ENCODE measurements at regions of chr10 and their contacts with region 1.

Region 1: GRCh38 chr10:71727738-71728737 is 8.5 kb upstream of the C10orf105 start:
- DNase-seq: peak; percentile 34 to 91 (median 82)
- ATAC-seq: peak; percentile 78
- H3K4me3 ChIP-seq: peak overlapping the region; percentile 2
- H3K4me3 Mint-ChIP-seq: peak overlapping the region; percentile 61 to 86 (median 78)
- H3K27ac ChIP-seq: peak overlapping the region; percentile 79
- H3K27ac Mint-ChIP-seq: peak overlapping the region; percentile 96 to 99 (median 97)
- H3K4me1 ChIP-seq: peaks cover 75 to 83% of the 10 kb centered on the region in 2 donors
- H3K4me1 Mint-ChIP-seq: peaks cover 54 to 97% (median 72%) of the 10 kb centered on the region in 7 donors
- H3K27me3 ChIP-seq: no peaks in the 10 kb centered on the region
- H3K27me3 Mint-ChIP-seq: no peaks in the 10 kb centered on the region

Region 2: GRCh38 chr10:71713135-71714030 is 14.7 kb before region 1 on chr10:
- CTCF ChIA-PET with region 1: interaction called, 25 read pairs
- POLR2A ChIA-PET with region 1: interaction called, 150 read pairs
- intact Hi-C with region 1: loop called (anchors 1 kb)
- DNase-seq: peak in 2 of 9 donors; percentile 40 to 41
- ATAC-seq: peak; percentile 47
- H3K4me3 ChIP-seq: peak overlapping the region; percentile 9
- H3K4me3 Mint-ChIP-seq: peak overlapping the region; percentile 73 to 86 (median 81)
- H3K27ac ChIP-seq: peak overlapping the region; percentile 91
- H3K27ac Mint-ChIP-seq: peak overlapping the region; percentile 97 to 100 (median 98)
- H3K4me1 ChIP-seq: peaks cover 45 to 63% of the 10 kb centered on the region in 2 donors
- H3K4me1 Mint-ChIP-seq: peaks cover 41 to 86% (median 73%) of the 10 kb centered on the region in 7 donors
- H3K27me3 ChIP-seq: no peaks in the 10 kb centered on the region
- H3K27me3 Mint-ChIP-seq: no peaks in the 10 kb centered on the region

Region 3: DNA sequence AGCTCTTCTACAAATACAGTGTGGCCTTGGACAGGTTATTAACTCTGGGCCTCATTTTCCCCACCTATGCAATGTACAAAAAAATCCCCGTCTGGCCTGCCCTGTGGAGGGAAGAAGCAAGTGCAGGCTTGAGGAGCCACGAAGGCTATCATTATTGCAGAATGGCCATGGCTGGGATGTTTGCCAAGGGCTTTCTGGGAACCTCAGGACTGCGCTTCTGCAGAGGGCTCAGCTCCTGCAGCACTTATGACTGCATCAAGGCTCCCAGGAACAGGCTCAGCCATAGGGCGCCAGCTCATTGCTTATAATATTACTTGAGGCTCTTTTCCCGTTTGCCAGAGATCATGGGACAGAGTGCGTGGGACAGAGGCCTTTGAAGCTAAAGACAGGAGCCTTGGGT is 12.0 kb after region 1 on chr10:
- CTCF ChIA-PET with region 1: interaction called, 7 read pairs
- POLR2A ChIA-PET with region 1: interaction called, 521 read pairs
- intact Hi-C with region 1: loop called (anchors 1 kb)
- DNase-seq: no peak
- ATAC-seq: no peak
- H3K4me3 ChIP-seq: peak overlapping the region; percentile 55
- H3K4me3 Mint-ChIP-seq: peak overlapping the region; percentile 12 to 90 (median 72)
- H3K27ac ChIP-seq: peak overlapping the region; percentile 74
- H3K27ac Mint-ChIP-seq: peak overlapping the region; percentile 81 to 99 (median 96)
- H3K4me1 ChIP-seq: peaks cover 85 to 97% of the 10 kb centered on the region in 2 donors
- H3K4me1 Mint-ChIP-seq: peaks cover 73 to 100% (median 95%) of the 10 kb centered on the region in 7 donors
- H3K27me3 ChIP-seq: no peaks in the 10 kb centered on the region
- H3K27me3 Mint-ChIP-seq: no peaks in the 10 kb centered on the region

Region 4: GRCh38 chr10:71748671-71749191 is 20.7 kb after region 1 on chr10:
- CTCF ChIA-PET with region 1: interaction called, 30 read pairs
- POLR2A ChIA-PET with region 1: interaction called, 521 read pairs
- intact Hi-C with region 1: loop called (anchors 1 kb)
- DNase-seq: peak; percentile 53 to 93 (median 88)
- ATAC-seq: peak; percentile 87
- H3K4me3 ChIP-seq: peak overlapping the region; percentile 40
- H3K4me3 Mint-ChIP-seq: peak overlapping the region; percentile 74 to 90 (median 85)
- H3K27ac ChIP-seq: peak overlapping the region; percentile 74
- H3K27ac Mint-ChIP-seq: peak overlapping the region; percentile 95 to 99 (median 98)
- H3K4me1 ChIP-seq: peaks cover 93 to 99% of the 10 kb centered on the region in 2 donors
- H3K4me1 Mint-ChIP-seq: peaks cover 80 to 98% (median 93%) of the 10 kb centered on the region in 7 donors
- H3K27me3 ChIP-seq: no peaks in the 10 kb centered on the region
- H3K27me3 Mint-ChIP-seq: no peaks in the 10 kb centered on the region

Region 5: DNA sequence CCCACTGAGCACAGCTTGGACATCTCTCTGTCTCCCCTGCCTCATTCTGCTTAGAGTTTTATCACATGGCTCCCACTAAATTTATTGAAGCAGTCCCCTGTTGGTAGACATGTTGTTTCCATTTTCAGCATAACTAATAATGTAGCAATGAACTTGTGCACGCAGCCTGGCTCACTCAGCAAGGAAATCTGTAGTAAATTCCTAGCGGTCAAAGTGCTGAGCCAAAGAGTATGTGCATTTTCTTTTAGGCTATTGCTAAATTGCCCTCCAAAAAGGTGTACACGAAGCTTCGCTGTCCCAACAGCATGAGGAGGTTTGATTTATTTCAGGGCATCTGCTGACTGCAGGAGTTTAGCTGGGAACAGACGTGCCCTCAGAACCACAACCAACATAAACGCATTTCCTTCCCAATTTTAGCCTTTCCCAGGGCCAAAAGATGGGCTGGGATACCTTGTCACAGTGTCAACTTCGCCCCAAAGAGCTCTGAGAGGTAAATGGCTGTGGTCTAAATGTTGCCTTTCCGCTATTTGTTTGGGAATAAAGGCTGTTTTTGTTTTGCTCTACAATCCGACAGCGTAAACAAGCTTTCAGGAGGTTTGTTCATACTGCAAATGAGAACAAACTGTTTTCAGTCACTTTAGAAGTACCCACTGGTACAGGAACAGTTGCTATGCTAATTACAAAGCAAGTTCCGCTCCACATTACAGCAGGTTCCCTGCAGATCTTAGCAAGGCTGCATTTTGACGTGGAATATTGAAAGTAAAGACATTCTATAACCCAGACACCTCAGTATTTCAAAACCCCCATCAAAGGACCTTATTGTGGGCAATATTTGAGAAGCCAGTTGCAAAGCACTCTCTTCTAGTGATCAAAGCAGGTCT is 28.5 kb after region 1 on chr10:
- CTCF ChIA-PET with region 1: interaction called, 31 read pairs
- POLR2A ChIA-PET with region 1: interaction called, 102 read pairs
- intact Hi-C with region 1: loop called (anchors 2 kb)
- DNase-seq: peak in 7 of 9 donors; percentile 58 to 85 (median 74)
- ATAC-seq: peak; percentile 79
- H3K4me3 ChIP-seq: peak overlapping the region; percentile 21
- H3K4me3 Mint-ChIP-seq: peak overlapping the region; percentile 68 to 90 (median 80)
- H3K27ac ChIP-seq: peak overlapping the region; percentile 74
- H3K27ac Mint-ChIP-seq: peak overlapping the region; percentile 91 to 99 (median 97)
- H3K4me1 ChIP-seq: peaks cover 81 to 87% of the 10 kb centered on the region in 2 donors
- H3K4me1 Mint-ChIP-seq: peaks cover 71 to 94% (median 85%) of the 10 kb centered on the region in 7 donors
- H3K27me3 ChIP-seq: no peaks in the 10 kb centered on the region
- H3K27me3 Mint-ChIP-seq: no peaks in the 10 kb centered on the region

Region 6: DNA sequence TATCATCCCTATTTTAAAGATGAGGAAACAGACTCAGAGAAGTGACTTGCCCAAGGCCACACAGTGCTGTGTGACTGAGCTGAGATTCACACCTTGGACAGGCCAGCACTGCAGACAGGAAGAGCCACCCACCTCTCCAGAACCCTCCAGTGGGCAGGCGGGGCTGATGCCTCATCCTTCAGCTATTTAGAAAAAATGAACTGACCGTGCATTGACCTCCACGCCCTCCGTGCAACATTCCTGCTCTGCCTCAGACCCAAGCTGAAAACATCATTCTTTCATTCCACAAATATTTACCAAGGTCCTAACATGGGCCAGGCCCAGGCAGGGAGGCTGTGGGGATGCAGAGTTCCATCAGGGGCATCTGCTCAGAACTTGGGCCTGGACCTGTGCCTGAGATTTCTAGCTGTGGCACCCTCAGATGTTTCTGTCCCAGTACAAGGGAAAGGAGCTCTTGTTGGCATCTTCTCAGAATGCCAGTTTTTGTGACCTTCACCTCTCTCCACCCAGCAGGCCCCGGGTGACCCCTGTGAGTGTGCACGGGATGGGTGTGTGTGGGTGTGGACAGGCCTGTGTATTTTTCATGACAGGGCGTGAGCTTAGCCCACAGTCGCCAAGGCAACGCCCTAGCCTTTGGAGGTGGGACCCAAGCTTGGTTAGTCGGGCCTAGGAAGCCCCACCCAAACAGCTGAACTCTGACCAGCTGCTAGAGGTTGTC is 38.8 kb after region 1 on chr10:
- CTCF ChIA-PET with region 1: interaction called, 48 read pairs
- POLR2A ChIA-PET with region 1: interaction called, 136 read pairs
- intact Hi-C with region 1: loop called (anchors 1 kb)
- DNase-seq: no peak
- ATAC-seq: peak; percentile 36
- H3K4me3 ChIP-seq: no peak overlapping the region
- H3K4me3 Mint-ChIP-seq: peak overlapping the region; percentile 25 to 98 (median 71)
- H3K27ac ChIP-seq: peak overlapping the region; percentile 93
- H3K27ac Mint-ChIP-seq: peak overlapping the region; percentile 89 to 98 (median 95)
- H3K4me1 ChIP-seq: peaks cover 89 to 90% of the 10 kb centered on the region in 2 donors
- H3K4me1 Mint-ChIP-seq: peaks cover 71 to 96% (median 91%) of the 10 kb centered on the region in 7 donors
- H3K27me3 ChIP-seq: no peaks in the 10 kb centered on the region
- H3K27me3 Mint-ChIP-seq: no peaks in the 10 kb centered on the region

Measured in naive thymus-derived CD4-positive, alpha-beta T cell (primary cell).